CD8-positive, alpha-beta T cell (primary cell): ENCODE measurements at regions of chr21 and their contacts with region 1.

Region 1: GRCh38 chr21:29477941-29478340 is 179.2 kb downstream of the BACH1 start:
- DNase-seq: no peak
- ATAC-seq: no peak
- H3K4me3 ChIP-seq: no peak overlapping the region
- H3K4me3 Mint-ChIP-seq: no peak overlapping the region
- H3K27ac ChIP-seq: no peak overlapping the region
- H3K27ac Mint-ChIP-seq: no peak overlapping the region
- H3K4me1 ChIP-seq: no peaks in the 10 kb centered on the region
- H3K4me1 Mint-ChIP-seq: peaks cover 19% of the 10 kb centered on the region
- H3K27me3 ChIP-seq: no peaks in the 10 kb centered on the region
- H3K27me3 Mint-ChIP-seq: no peaks in the 10 kb centered on the region
- CTCF ChIP-seq: no peak

Region 2: DNA sequence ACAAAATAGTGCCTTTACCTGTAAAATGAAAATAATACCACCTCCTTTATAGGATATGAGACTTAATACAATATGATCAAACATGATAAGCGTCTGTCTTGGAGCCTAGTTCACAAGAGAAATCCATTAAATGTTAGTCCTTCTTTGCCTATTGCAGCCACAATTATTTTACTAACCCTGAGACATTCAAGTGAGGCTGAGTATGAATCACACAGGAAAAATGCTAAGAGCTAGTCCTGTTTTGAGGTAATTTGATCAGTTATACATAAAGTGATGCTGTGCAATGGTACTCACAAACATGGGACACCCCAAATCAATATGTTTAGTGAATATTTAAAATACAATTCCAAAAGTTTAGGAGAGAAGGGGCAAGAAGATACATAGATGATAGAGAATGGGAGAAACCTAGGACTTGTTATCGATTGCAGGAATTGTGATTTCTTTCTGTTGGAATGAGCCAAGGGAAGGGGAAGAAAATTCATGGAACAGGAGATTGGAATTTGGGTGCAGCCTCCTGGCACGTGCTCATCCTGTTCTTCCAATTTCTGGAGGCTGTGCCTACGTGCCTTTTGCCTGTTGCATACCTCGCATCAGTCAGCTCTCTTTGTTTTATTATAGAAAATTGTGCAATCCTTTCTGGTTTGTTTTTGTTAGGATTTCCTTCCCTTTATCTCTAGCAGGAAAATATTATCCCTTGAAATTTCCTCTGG is 219.2 kb before region 1 on chr21:
- CTCF ChIA-PET with region 1: no interaction called
- POLR2A ChIA-PET with region 1: no interaction called
- intact Hi-C with region 1: no loop called
- DNase-seq: no peak
- ATAC-seq: no peak
- H3K4me3 ChIP-seq: no peak overlapping the region
- H3K4me3 Mint-ChIP-seq: no peak overlapping the region
- H3K27ac ChIP-seq: no peak overlapping the region
- H3K27ac Mint-ChIP-seq: no peak overlapping the region
- H3K4me1 ChIP-seq: no peaks in the 10 kb centered on the region
- H3K4me1 Mint-ChIP-seq: no peaks in the 10 kb centered on the region
- H3K27me3 ChIP-seq: no peaks in the 10 kb centered on the region
- H3K27me3 Mint-ChIP-seq: no peaks in the 10 kb centered on the region
- CTCF ChIP-seq: no peak

Region 3: GRCh38 chr21:29360799-29361765 is 116.9 kb before region 1 on chr21:
- CTCF ChIA-PET with region 1: interaction called, 11 read pairs
- POLR2A ChIA-PET with region 1: no interaction called
- intact Hi-C with region 1: no loop called
- DNase-seq: peak in 2 of 9 experiments; percentile 18 to 40
- ATAC-seq: no peak
- H3K4me3 ChIP-seq: no peak overlapping the region
- H3K4me3 Mint-ChIP-seq: no peak overlapping the region
- H3K27ac ChIP-seq: no peak overlapping the region
- H3K27ac Mint-ChIP-seq: peak overlapping the region; percentile 11
- H3K4me1 ChIP-seq: no peaks in the 10 kb centered on the region
- H3K4me1 Mint-ChIP-seq: peaks cover 18% of the 10 kb centered on the region
- H3K27me3 ChIP-seq: no peaks in the 10 kb centered on the region
- H3K27me3 Mint-ChIP-seq: no peaks in the 10 kb centered on the region
- CTCF ChIP-seq: peak; percentile 38

Region 4: DNA sequence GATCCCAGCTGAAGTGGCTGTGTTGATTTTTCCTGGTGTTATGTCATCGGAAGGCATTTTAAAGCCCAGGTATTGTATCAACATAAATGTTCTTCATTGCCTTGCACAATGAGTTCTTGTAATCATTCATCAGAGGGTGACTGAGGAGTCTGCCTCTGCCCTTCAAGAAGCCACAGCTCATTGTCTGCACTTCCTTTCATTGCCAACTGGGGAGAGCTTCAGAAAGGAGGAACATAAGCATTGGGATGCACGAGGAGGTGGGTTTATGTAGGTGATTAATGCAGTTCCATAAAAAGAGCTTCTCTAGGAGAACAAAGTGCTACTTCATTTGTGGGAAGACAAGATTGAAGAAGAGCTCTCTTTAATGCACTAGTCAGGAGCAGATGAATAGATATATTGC is 54.8 kb before region 1 on chr21:
- CTCF ChIA-PET with region 1: no interaction called
- POLR2A ChIA-PET with region 1: no interaction called
- intact Hi-C with region 1: loop called in 1 of 2 experiments (anchors 10 kb)
- DNase-seq: no peak
- ATAC-seq: no peak
- H3K4me3 ChIP-seq: no peak overlapping the region
- H3K4me3 Mint-ChIP-seq: no peak overlapping the region
- H3K27ac ChIP-seq: no peak overlapping the region
- H3K27ac Mint-ChIP-seq: no peak overlapping the region
- H3K4me1 ChIP-seq: no peaks in the 10 kb centered on the region
- H3K4me1 Mint-ChIP-seq: peaks cover 27% of the 10 kb centered on the region
- H3K27me3 ChIP-seq: no peaks in the 10 kb centered on the region
- H3K27me3 Mint-ChIP-seq: no peaks in the 10 kb centered on the region
- CTCF ChIP-seq: no peak

Region 5: GRCh38 chr21:29436143-29436542 is 41.8 kb before region 1 on chr21:
- CTCF ChIA-PET with region 1: interaction called, 3 read pairs
- POLR2A ChIA-PET with region 1: no interaction called
- intact Hi-C with region 1: loop called in 1 of 2 experiments (anchors 5 kb)
- DNase-seq: peak in 8 of 9 experiments; percentile 20 to 70 (median 40)
- ATAC-seq: peak; percentile 95
- H3K4me3 ChIP-seq: peak overlapping the region; percentile 25 to 33
- H3K4me3 Mint-ChIP-seq: peak overlapping the region; percentile 81
- H3K27ac ChIP-seq: peak overlapping the region; percentile 6 to 43
- H3K27ac Mint-ChIP-seq: peak overlapping the region; percentile 96
- H3K4me1 ChIP-seq: peaks cover 19% of the 10 kb centered on the region
- H3K4me1 Mint-ChIP-seq: peaks cover 42% of the 10 kb centered on the region
- H3K27me3 ChIP-seq: no peaks in the 10 kb centered on the region
- H3K27me3 Mint-ChIP-seq: no peaks in the 10 kb centered on the region
- CTCF ChIP-seq: no peak

Region 6: GRCh38 chr21:29449306-29449950 is 28.5 kb before region 1 on chr21:
- CTCF ChIA-PET with region 1: interaction called, 30 read pairs
- POLR2A ChIA-PET with region 1: interaction called, 3 read pairs
- intact Hi-C with region 1: loop called in 1 of 2 experiments (anchors 1 kb)
- DNase-seq: peak in 3 of 9 experiments; percentile 41 to 69 (median 42)
- ATAC-seq: peak; percentile 84
- H3K4me3 ChIP-seq: no peak overlapping the region
- H3K4me3 Mint-ChIP-seq: peak overlapping the region; percentile 70
- H3K27ac ChIP-seq: peak overlapping the region; percentile 52 to 65
- H3K27ac Mint-ChIP-seq: peak overlapping the region; percentile 97
- H3K4me1 ChIP-seq: peaks cover 23% of the 10 kb centered on the region
- H3K4me1 Mint-ChIP-seq: peaks cover 40% of the 10 kb centered on the region
- H3K27me3 ChIP-seq: no peaks in the 10 kb centered on the region
- H3K27me3 Mint-ChIP-seq: no peaks in the 10 kb centered on the region
- CTCF ChIP-seq: no peak

Region 7: GRCh38 chr21:29465546-29465945 is 12.4 kb before region 1 on chr21:
- CTCF ChIA-PET with region 1: interaction called, 10 read pairs
- POLR2A ChIA-PET with region 1: interaction called, 3 read pairs
- intact Hi-C with region 1: no loop called
- DNase-seq: no peak
- ATAC-seq: no peak
- H3K4me3 ChIP-seq: no peak overlapping the region
- H3K4me3 Mint-ChIP-seq: no peak overlapping the region
- H3K27ac ChIP-seq: no peak overlapping the region
- H3K27ac Mint-ChIP-seq: no peak overlapping the region
- H3K4me1 ChIP-seq: no peaks in the 10 kb centered on the region
- H3K4me1 Mint-ChIP-seq: peaks cover 13% of the 10 kb centered on the region
- H3K27me3 ChIP-seq: no peaks in the 10 kb centered on the region
- H3K27me3 Mint-ChIP-seq: no peaks in the 10 kb centered on the region
- CTCF ChIP-seq: no peak

Region 8: GRCh38 chr21:29849735-29850176 is 371.8 kb after region 1 on chr21:
- CTCF ChIA-PET with region 1: interaction called, 12 read pairs
- POLR2A ChIA-PET with region 1: no interaction called
- intact Hi-C with region 1: loop called in 1 of 2 experiments (anchors 5 kb)
- DNase-seq: peak in 8 of 9 experiments; percentile 3 to 55 (median 23)
- ATAC-seq: peak; percentile 90
- H3K4me3 ChIP-seq: no peak overlapping the region
- H3K4me3 Mint-ChIP-seq: no peak overlapping the region
- H3K27ac ChIP-seq: no peak overlapping the region
- H3K27ac Mint-ChIP-seq: no peak overlapping the region
- H3K4me1 ChIP-seq: no peaks in the 10 kb centered on the region
- H3K4me1 Mint-ChIP-seq: no peaks in the 10 kb centered on the region
- H3K27me3 ChIP-seq: no peaks in the 10 kb centered on the region
- H3K27me3 Mint-ChIP-seq: peaks cover 11% of the 10 kb centered on the region
- CTCF ChIP-seq: peak; percentile 67